AG04449 (cell line): ENCODE measurements at regions of chr13 and their contacts with region 1.

Region 1: GRCh38 chr13:101514788-101515187 is 62.3 kb downstream of the ITGBL1 start:
- DNase-seq: no peak
- H3K4me3 ChIP-seq: no peak overlapping the region
- CTCF ChIP-seq: peak; percentile 53

Region 2: GRCh38 chr13:101757446-101758039 is 242.8 kb after region 1 on chr13:
- CTCF ChIA-PET with region 1: interaction called, 27 read pairs
- POLR2A ChIA-PET with region 1: no interaction called
- DNase-seq: no peak
- H3K4me3 ChIP-seq: no peak overlapping the region
- CTCF ChIP-seq: peak; percentile 41